K562 (cell line): ENCODE measurements at regions of chr22 and their contacts with region 1.

Region 1: GRCh38 chr22:16601437-16602245 is 9.0 kb upstream of the CCT8L2 start:
- DNase-seq: peak; percentile 92 to 97 (median 94)
- ATAC-seq: peak; percentile 48
- H3K4me3 ChIP-seq: peak overlapping the region; percentile 73
- H3K27ac ChIP-seq: peak overlapping the region; percentile 89
- H3K4me1 ChIP-seq: peaks cover 22% of the 10 kb centered on the region in 2 experiments; a peak in 4 of 5 replicates
- H3K27me3 ChIP-seq: no peaks in the 10 kb centered on the region
- CTCF ChIP-seq: 0 out of 6 replicates have a peak, but pooled peaks of 2 of the 3 experiments have one; percentile 1 to 2
- EP300 ChIP-seq: no peak; the same call in 1 of the 2 replicates
- POLR2A ChIP-seq: peak; percentile 77
- RAD21 ChIP-seq: no peak

Region 2: GRCh38 chr22:16585876-16586569 is 15.6 kb before region 1 on chr22:
- CTCF ChIA-PET with region 1: no interaction called
- POLR2A ChIA-PET with region 1: interaction called, 14 read pairs
- in situ Hi-C with region 1: no loop called
- intact Hi-C with region 1: no loop called
- DNase-seq: peak; percentile 41 to 79 (median 57)
- ATAC-seq: peak; percentile 51
- H3K4me3 ChIP-seq: no peak overlapping the region
- H3K27ac ChIP-seq: no peak overlapping the region
- H3K4me1 ChIP-seq: peaks cover 4 to 10% of the 10 kb centered on the region in 2 experiments; a peak in 4 of 5 replicates
- H3K27me3 ChIP-seq: peaks cover 0 to 4% of the 10 kb centered on the region in 2 experiments; a peak in 2 of 5 replicates
- CTCF ChIP-seq: no peak
- EP300 ChIP-seq: peak; percentile 70
- POLR2A ChIP-seq: no peak
- RAD21 ChIP-seq: no peak

Region 3: DNA sequence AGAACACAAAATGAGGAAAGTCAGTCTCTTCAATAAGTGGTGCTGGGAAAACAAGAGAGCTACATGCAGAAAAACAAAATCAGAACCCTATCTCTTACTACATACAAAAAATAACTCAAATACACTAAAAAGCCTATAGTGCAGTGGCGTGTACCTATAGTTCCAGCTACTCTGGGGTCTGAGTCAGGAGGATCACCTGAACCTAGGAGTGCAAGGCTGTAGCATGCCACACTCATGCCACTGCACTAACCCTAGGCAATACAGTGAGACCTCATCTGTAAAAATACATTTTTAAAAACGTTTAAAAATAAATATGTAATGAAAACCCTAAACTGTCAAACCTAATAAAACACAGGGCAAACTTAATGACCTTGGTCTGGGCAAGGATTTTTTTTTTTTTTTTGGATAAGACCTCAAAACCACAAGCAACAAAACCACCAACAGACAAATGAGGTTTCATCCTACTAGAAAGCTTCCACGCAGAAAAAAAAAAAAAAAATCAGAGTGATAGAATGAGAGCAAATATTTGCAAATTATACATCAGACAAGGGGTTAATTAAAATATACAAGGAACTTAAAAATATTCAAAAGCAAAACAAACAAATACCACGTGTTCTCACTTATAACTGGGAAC is 188.3 kb after region 1 on chr22:
- CTCF ChIA-PET with region 1: no interaction called
- POLR2A ChIA-PET with region 1: no interaction called
- in situ Hi-C with region 1: no loop called
- intact Hi-C with region 1: no loop called
- DNase-seq: no peak
- ATAC-seq: peak; percentile 55
- H3K4me3 ChIP-seq: no peak overlapping the region
- H3K27ac ChIP-seq: no peak overlapping the region
- H3K4me1 ChIP-seq: no peaks in the 10 kb centered on the region
- H3K27me3 ChIP-seq: no peaks in the 10 kb centered on the region
- CTCF ChIP-seq: no peak
- EP300 ChIP-seq: no peak
- POLR2A ChIP-seq: no peak
- RAD21 ChIP-seq: no peak